ENCODE measurements at regions of chr5 and their contacts with region 1.

Region 1: DNA sequence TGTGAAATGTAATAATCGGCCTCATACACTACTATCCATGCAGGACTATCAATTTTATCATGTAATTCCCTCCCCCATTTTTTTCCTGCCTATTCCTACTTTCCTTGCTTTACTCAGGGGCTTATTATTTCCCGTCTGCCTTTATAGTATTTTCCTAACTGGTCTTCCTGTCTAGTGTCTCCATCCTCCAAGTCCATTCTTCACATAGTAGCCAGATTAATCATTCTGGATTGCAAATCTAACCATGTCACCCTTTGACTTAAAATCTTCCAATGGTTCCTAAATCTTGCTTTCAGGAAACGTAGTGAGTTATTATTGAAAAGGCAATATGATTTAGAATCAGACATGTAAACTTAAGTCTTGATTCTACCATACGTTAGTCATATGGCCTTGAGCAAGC is 307.4 kb upstream of the HAPLN1 start:
- DNase-seq: no peak

Region 2: DNA sequence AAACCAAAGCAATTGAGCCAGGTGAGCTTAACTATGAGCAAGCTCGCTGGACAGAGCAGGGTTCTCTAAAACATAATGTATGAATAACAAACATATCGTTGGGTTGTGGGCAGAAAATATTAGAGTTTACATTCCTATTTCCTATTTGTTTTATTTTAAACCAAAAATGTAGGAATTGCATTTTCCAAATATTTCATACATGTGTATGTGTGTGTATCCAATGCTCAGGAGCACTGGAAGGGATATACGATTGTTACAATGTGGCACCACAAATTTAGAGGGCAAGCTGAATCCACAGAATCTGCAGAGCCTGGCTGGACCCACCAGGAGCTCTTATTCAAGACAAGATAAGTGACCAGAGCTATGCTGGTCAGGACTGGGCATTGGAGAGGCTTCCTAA is 17.9 kb after region 1 on chr5:
- intact Hi-C with region 1: loop called in 1 of 2 experiments (anchors 1 kb)
- DNase-seq: no peak